Caco-2 (cell line): ENCODE measurements at regions of chr2 and their contacts with region 1.

Region 1: DNA sequence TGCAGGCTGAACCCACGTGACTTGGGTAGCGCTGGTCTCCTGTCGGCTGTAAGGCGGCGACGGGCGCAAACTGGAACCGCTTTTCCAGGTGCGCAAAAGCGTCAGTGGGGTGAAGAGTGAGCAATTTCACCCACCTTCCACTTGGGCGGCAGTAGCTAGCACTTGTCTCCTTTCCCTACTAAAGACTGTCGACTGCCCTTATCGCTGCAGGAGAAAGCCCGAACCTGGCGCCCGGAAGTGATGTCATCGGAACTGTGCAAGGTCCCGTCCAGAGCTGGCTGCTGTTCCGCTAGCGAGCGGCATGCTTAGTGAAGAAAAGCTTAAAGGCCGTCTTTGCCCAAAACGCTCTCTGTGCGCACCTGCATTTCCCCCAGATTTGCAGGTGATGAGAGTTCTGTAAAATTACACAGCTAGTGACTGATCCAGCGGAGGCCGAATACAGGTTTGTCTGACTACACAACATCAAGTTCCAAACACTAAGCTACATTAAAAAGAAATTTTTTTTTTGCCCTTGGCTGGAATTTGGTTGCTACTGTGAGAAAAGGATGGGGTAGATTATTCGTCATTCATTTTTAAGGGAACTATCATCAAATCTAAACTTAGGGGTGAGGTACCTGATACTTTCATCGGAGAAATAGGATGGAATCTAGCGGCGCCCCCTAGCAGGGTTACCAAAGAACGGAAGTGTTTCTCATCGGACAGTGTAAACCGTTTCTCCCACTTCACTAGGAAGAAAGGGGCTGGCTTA is at the start of gene OSGEPL1:
- DNase-seq: peak; percentile 95 to 97
- H3K4me3 ChIP-seq: peak within 1 kb of the TSS; percentile 48
- H3K4me3 Mint-ChIP-seq: peak within 1 kb of the TSS; percentile 98
- H3K27ac Mint-ChIP-seq: peak within 1 kb of the TSS; percentile 87
- H3K4me1 ChIP-seq: peaks cover 8% of the 10 kb centered on the region; the same call in 1 of the 2 replicates
- H3K4me1 Mint-ChIP-seq: no peaks in the 10 kb centered on the region
- H3K27me3 ChIP-seq: no peaks in the 10 kb centered on the region
- H3K27me3 Mint-ChIP-seq: no peaks in the 10 kb centered on the region
- CTCF ChIP-seq: peak; percentile 47 to 74
- total RNA-seq, gene OSGEPL1: 5.0 and 5.3 TPM in 2 replicates

Region 2: GRCh38 chr2:189440947-189441708 is 321.6 kb before region 1 on chr2 and contains the start of gene WDR75:
- CTCF ChIA-PET with region 1: no interaction called
- POLR2A ChIA-PET with region 1: no interaction called
- intact Hi-C with region 1: loop called (anchors 10 kb)
- DNase-seq: peak; percentile 95
- H3K4me3 ChIP-seq: peak within 1 kb of the TSS; percentile 47
- H3K4me3 Mint-ChIP-seq: peak within 1 kb of the TSS; percentile 99
- H3K27ac Mint-ChIP-seq: peak within 1 kb of the TSS; percentile 98
- H3K4me1 ChIP-seq: 0 out of 2 replicates have a peak, but pooled peaks cover 4% of the 10 kb centered on the region
- H3K4me1 Mint-ChIP-seq: no peaks in the 10 kb centered on the region
- H3K27me3 ChIP-seq: no peaks in the 10 kb centered on the region
- H3K27me3 Mint-ChIP-seq: no peaks in the 10 kb centered on the region
- CTCF ChIP-seq: no peak
- total RNA-seq, gene WDR75: 50.2 and 57.7 TPM in 2 replicates

Region 3: DNA sequence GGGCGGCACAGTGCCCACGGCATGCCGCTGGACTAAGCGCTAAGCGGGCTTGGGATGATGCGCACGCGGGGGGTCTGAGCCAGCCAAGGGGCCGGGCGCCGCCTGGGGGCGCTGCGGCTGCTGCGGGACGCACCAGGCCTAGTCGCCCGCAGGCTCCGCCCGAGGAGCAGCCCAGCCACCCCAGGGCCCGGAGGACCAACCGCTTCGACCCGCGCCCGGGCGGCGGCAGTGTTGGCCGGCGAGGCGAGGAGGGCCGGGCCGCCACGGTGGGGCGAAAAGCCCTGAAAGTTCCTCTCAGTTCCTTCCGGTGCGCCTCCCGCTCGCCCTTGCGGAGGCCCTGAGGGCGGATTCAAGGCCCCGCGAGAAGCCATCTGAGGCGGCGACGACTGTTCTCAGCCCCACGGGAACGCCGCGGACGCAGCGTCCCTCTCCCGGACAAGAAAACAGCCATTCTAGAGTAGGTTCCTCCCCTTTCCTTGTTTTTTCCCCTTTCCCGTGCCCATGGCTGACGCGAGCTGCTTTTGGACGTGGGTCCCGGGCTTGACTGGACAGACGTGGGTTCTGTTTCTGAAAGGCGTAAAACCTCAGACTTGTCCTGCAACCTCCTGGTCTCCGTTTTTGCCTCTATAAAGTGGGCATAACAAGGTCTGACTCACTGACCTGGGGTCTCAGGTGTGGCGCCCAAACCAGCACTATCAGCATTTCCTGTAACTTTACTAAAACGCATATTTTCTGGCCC is 88.2 kb before region 1 on chr2 and contains the start of gene ANKAR:
- CTCF ChIA-PET with region 1: interaction called, 9 read pairs
- POLR2A ChIA-PET with region 1: no interaction called
- intact Hi-C with region 1: loop called (anchors 1 kb)
- DNase-seq: peak; percentile 94 to 98
- H3K4me3 ChIP-seq: peak within 1 kb of the TSS; percentile 77
- H3K4me3 Mint-ChIP-seq: peak within 1 kb of the TSS; percentile 88
- H3K27ac Mint-ChIP-seq: peak within 1 kb of the TSS; percentile 92
- H3K4me1 ChIP-seq: no peaks in the 10 kb centered on the region
- H3K4me1 Mint-ChIP-seq: peaks cover 11% of the 10 kb centered on the region
- H3K27me3 ChIP-seq: no peaks in the 10 kb centered on the region
- H3K27me3 Mint-ChIP-seq: no peaks in the 10 kb centered on the region
- CTCF ChIP-seq: peak; percentile 68 to 79
- total RNA-seq, gene ANKAR: 2.2 and 4.7 TPM in 2 replicates

Region 4: DNA sequence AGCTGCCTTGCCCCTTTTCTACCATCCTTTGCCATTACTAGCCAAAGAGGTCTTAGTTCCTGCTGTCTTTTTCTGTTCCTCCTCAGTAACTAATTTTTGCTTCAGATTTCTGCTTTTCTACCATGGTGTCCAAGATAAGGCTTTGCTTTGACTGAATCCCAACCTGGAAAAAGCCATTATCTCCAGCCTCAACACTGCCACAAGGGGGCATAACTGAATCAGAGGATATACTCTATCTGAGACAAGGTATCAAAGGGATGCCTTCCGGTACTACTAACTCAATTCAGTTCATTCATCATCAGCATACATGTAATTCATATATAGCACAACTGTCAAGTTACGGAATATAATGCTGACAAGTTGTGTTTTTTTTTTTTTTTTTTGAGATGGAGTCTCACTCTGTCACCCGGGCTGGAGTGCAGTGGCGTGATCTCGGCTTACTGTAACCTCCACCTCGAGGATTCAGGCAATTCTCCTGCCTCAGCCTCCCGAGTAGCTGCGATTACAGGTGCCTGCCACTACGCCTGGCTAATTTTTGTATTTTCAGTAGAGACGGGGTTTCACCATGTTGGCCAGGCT is 11.6 kb before region 1 on chr2:
- CTCF ChIA-PET with region 1: interaction called, 8 read pairs
- POLR2A ChIA-PET with region 1: no interaction called
- intact Hi-C with region 1: loop called (anchors 1 kb)
- DNase-seq: peak; percentile 53 to 61
- H3K4me3 ChIP-seq: no peak overlapping the region
- H3K4me3 Mint-ChIP-seq: no peak overlapping the region
- H3K27ac Mint-ChIP-seq: no peak overlapping the region
- H3K4me1 ChIP-seq: no peaks in the 10 kb centered on the region
- H3K4me1 Mint-ChIP-seq: no peaks in the 10 kb centered on the region
- H3K27me3 ChIP-seq: no peaks in the 10 kb centered on the region
- H3K27me3 Mint-ChIP-seq: no peaks in the 10 kb centered on the region
- CTCF ChIP-seq: peak; percentile 57 to 69

Region 5: GRCh38 chr2:189783927-189784867 is 21.5 kb after region 1 on chr2 and contains the starts of genes ORMDL1 and PMS1:
- CTCF ChIA-PET with region 1: interaction called, 14 read pairs
- POLR2A ChIA-PET with region 1: interaction called, 16 read pairs
- intact Hi-C with region 1: loop called (anchors 1 kb)
- DNase-seq: peak; percentile 95 to 98
- H3K4me3 ChIP-seq: peak within 1 kb of the TSS; percentile 88
- H3K4me3 Mint-ChIP-seq: peak within 1 kb of the TSS; percentile 83
- H3K27ac Mint-ChIP-seq: peak within 1 kb of the TSS; percentile 82
- H3K4me1 ChIP-seq: peaks cover 5% of the 10 kb centered on the region; the same call in 1 of the 2 replicates
- H3K4me1 Mint-ChIP-seq: peaks cover 23% of the 10 kb centered on the region
- H3K27me3 ChIP-seq: no peaks in the 10 kb centered on the region
- H3K27me3 Mint-ChIP-seq: no peaks in the 10 kb centered on the region
- CTCF ChIP-seq: no peak
- total RNA-seq, gene ORMDL1: 52.1 and 52.7 TPM in 2 replicates
- total RNA-seq, gene PMS1: 38.1 and 40.2 TPM in 2 replicates

Region 6: GRCh38 chr2:190425221-190425866 is 662.6 kb after region 1 on chr2:
- CTCF ChIA-PET with region 1: no interaction called
- POLR2A ChIA-PET with region 1: no interaction called
- intact Hi-C with region 1: no loop called
- DNase-seq: no peak
- H3K4me3 ChIP-seq: no peak overlapping the region
- H3K4me3 Mint-ChIP-seq: no peak overlapping the region
- H3K27ac Mint-ChIP-seq: no peak overlapping the region
- H3K4me1 ChIP-seq: no peaks in the 10 kb centered on the region
- H3K4me1 Mint-ChIP-seq: no peaks in the 10 kb centered on the region
- H3K27me3 ChIP-seq: no peaks in the 10 kb centered on the region
- H3K27me3 Mint-ChIP-seq: no peaks in the 10 kb centered on the region
- CTCF ChIP-seq: no peak